ENCODE measurements at regions of chr17 and their contacts with region 1.

Region 1: GRCh38 chr17:47119746-47120520 is 69.2 kb downstream of the CDC27 start:
- DNase-seq: peak; percentile 84
- ATAC-seq: peak; percentile 95
- H3K4me3 ChIP-seq: no peak overlapping the region
- H3K27ac ChIP-seq: 0 out of 2 replicates have a peak overlapping the region, but pooled peaks have one; percentile 2
- H3K4me1 ChIP-seq: peaks cover 20% of the 10 kb centered on the region
- H3K27me3 ChIP-seq: no peaks in the 10 kb centered on the region
- CTCF ChIP-seq: no peak

Region 2: DNA sequence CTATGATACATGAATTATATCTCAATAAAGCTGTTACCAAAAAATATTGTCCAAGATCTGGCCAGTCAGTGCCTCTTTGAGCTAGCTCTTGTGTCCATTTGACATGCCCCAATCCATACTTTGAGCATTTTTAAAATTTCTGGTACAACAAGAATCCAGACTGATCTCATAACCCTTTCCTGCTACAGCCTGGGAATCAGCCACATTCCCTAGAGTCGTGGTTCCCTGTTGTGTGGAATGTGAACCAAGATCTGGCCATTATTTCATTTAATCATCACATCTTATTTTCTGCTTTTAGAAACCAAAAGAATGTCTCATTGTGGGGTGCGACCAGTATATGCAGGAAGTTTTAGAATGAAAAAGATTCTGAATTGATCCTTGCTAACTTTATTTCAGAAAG is 106.6 kb before region 1 on chr17:
- CTCF ChIA-PET with region 1: no interaction called
- POLR2A ChIA-PET with region 1: no interaction called
- intact Hi-C with region 1: no loop called
- DNase-seq: no peak
- ATAC-seq: no peak
- H3K4me3 ChIP-seq: no peak overlapping the region
- H3K27ac ChIP-seq: no peak overlapping the region
- H3K4me1 ChIP-seq: no peaks in the 10 kb centered on the region
- H3K27me3 ChIP-seq: no peaks in the 10 kb centered on the region
- CTCF ChIP-seq: no peak

Region 3: GRCh38 chr17:47145351-47145750 is 25.4 kb after region 1 on chr17:
- CTCF ChIA-PET with region 1: no interaction called
- POLR2A ChIA-PET with region 1: interaction called, 4 read pairs
- intact Hi-C with region 1: loop called (anchors 5 kb)
- DNase-seq: no peak
- ATAC-seq: no peak
- H3K4me3 ChIP-seq: no peak overlapping the region
- H3K27ac ChIP-seq: no peak overlapping the region
- H3K4me1 ChIP-seq: no peaks in the 10 kb centered on the region
- H3K27me3 ChIP-seq: no peaks in the 10 kb centered on the region
- CTCF ChIP-seq: no peak

Region 4: GRCh38 chr17:47335101-47335936 is 215.4 kb after region 1 on chr17:
- CTCF ChIA-PET with region 1: no interaction called
- POLR2A ChIA-PET with region 1: no interaction called
- intact Hi-C with region 1: no loop called
- DNase-seq: no peak
- ATAC-seq: no peak
- H3K4me3 ChIP-seq: no peak overlapping the region
- H3K27ac ChIP-seq: no peak overlapping the region
- H3K4me1 ChIP-seq: peaks cover 7% of the 10 kb centered on the region
- H3K27me3 ChIP-seq: no peaks in the 10 kb centered on the region
- CTCF ChIP-seq: no peak

Region 5: GRCh38 chr17:47641202-47641601 is 521.3 kb after region 1 on chr17:
- CTCF ChIA-PET with region 1: no interaction called
- POLR2A ChIA-PET with region 1: no interaction called
- intact Hi-C with region 1: loop called (anchors 1 kb)
- DNase-seq: no peak
- ATAC-seq: peak; percentile 57; the same call in 1 of the 2 replicates
- H3K4me3 ChIP-seq: no peak overlapping the region
- H3K27ac ChIP-seq: no peak overlapping the region
- H3K4me1 ChIP-seq: no peaks in the 10 kb centered on the region
- H3K27me3 ChIP-seq: no peaks in the 10 kb centered on the region
- CTCF ChIP-seq: no peak